Activated CD4-positive, alpha-beta memory T cell treated with anti-CD3 and anti-CD28 coated beads, Interleukin-2, amount 10 ng/mL, durations not matched to agents 7 days and 5 days (primary cell): ENCODE measurements at regions of chr3 and their contacts with region 1.

Region 1: GRCh38 chr3:132399054-132399929 is 18.0 kb upstream of the DNAJC13 start:
- DNase-seq: peak; percentile 26
- H3K4me3 Mint-ChIP-seq: no peak overlapping the region
- H3K27ac Mint-ChIP-seq: no peak overlapping the region
- H3K4me1 Mint-ChIP-seq: no peaks in the 10 kb centered on the region
- H3K27me3 Mint-ChIP-seq: peaks cover 10% of the 10 kb centered on the region

Region 2: GRCh38 chr3:132343018-132343612 is 56.2 kb before region 1 on chr3:
- CTCF ChIA-PET with region 1: interaction called, 12 read pairs
- POLR2A ChIA-PET with region 1: no interaction called
- DNase-seq: peak; percentile 18
- H3K4me3 Mint-ChIP-seq: no peak overlapping the region
- H3K27ac Mint-ChIP-seq: no peak overlapping the region
- H3K4me1 Mint-ChIP-seq: peaks cover 4% of the 10 kb centered on the region
- H3K27me3 Mint-ChIP-seq: peaks cover 13% of the 10 kb centered on the region

Region 3: DNA sequence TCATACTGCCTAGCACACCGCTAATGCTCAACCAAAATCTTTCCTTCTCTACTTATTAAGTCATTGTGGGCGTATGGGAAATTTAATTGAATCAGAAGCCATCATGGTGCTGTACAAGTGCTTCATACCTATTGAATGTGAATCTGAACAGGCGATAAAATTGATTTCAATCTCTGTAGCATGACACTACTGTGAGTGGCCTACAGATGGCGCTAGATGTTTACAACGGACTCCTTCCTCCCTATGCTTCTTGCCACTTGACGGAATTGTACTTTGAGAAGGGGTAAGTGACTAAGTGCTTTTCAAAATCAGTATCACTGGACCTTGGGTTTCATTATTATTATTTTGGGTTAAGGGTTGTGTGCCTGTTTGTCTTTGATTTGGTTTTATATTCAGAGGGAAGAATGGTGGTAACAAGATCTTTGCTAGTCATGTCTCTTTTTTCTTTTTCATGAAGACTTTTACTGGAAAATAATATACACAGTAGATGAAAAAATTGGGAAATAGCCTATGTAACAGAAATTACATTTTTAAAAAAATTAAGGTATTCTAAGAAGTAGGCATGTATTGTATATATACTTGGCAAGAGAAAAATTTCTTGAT is 46.6 kb before region 1 on chr3:
- CTCF ChIA-PET with region 1: interaction called, 56 read pairs
- POLR2A ChIA-PET with region 1: no interaction called
- DNase-seq: peak; percentile 70
- H3K4me3 Mint-ChIP-seq: no peak overlapping the region
- H3K27ac Mint-ChIP-seq: no peak overlapping the region
- H3K4me1 Mint-ChIP-seq: peaks cover 11% of the 10 kb centered on the region
- H3K27me3 Mint-ChIP-seq: peaks cover 1% of the 10 kb centered on the region

Region 4: DNA sequence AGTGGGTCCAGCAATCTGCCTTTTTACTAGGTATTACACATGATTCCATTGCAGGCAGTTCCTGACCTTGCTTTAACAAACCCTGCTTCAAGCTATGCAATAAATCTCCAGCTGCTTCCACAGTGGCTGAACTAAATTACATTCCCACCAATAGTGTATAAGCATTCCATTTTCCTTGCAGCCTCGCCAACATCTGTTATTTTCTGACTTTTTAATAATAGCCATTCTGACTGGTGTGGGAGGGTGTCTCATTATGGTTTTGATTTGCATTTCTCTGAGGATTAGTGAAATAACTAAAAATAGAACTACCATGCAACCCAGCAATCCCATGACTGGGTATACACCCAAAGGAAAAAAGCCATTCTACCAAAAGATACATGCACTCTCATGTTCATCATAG is 18.4 kb before region 1 on chr3:
- CTCF ChIA-PET with region 1: no interaction called
- POLR2A ChIA-PET with region 1: no interaction called
- DNase-seq: no peak
- H3K4me3 Mint-ChIP-seq: no peak overlapping the region
- H3K27ac Mint-ChIP-seq: no peak overlapping the region
- H3K4me1 Mint-ChIP-seq: no peaks in the 10 kb centered on the region
- H3K27me3 Mint-ChIP-seq: peaks cover 6% of the 10 kb centered on the region